ENCODE measurements at regions of chr9 and their contacts with region 1.

Region 1: GRCh38 chr9:29691758-29692407 is 2118.6 kb upstream of the C9orf72 start:
- DNase-seq: peak; percentile 48
- H3K4me3 ChIP-seq: no peak overlapping the region
- H3K27ac ChIP-seq: no peak overlapping the region
- H3K4me1 ChIP-seq: no peaks in the 10 kb centered on the region
- H3K27me3 ChIP-seq: no peaks in the 10 kb centered on the region
- CTCF ChIP-seq: peak; percentile 44 to 70

Region 2: GRCh38 chr9:28539432-28540070 is 1152.3 kb before region 1 on chr9:
- CTCF ChIA-PET with region 1: interaction called, 7 read pairs
- dilution Hi-C with region 1: no loop called
- in situ Hi-C with region 1: no loop called
- intact Hi-C with region 1: loop called (anchors 10 kb)
- DNase-seq: peak; percentile 80
- H3K4me3 ChIP-seq: no peak overlapping the region
- H3K27ac ChIP-seq: no peak overlapping the region
- H3K4me1 ChIP-seq: peaks cover 4% of the 10 kb centered on the region
- H3K27me3 ChIP-seq: no peaks in the 10 kb centered on the region
- CTCF ChIP-seq: no peak

Region 3: DNA sequence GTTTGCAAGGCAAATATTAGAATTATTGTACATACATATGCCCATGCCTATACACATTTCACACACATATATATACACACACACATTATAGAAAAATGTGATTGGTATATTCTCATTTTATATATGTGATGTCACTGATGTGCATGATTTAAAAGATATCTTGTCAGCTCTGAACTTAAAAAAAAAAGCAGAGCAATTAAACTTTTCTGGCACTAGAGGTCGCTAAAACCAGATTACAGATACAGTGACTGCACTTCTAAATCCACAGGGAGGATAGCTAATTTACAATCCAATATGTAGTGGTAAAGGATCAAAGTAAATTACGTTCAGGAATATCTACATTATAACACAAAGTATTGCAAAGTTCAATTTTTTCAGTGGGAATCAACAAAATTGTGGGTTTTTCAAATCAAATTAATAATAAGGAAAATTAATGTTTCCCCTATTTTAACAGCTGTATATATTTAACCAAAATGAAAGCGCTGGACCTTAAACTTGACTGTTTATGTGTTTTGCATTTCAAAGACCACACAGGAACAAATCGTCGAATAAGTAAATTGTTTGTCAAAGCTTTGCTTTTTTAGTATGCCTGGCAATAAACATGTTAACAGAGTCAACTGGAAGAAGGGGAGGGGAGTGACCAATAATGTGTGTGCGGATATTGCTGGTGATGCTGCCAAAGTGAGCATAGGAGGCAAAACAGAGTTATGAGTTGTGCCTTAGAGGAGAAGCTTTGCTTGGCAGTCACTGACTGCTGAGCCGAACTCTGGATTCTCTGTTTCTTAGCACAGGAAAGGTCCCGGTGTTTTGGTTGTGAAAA is 917.3 kb before region 1 on chr9:
- CTCF ChIA-PET with region 1: interaction called, 5 read pairs
- dilution Hi-C with region 1: no loop called
- in situ Hi-C with region 1: loop called in 1 of 2 experiments (anchors 25 kb)
- intact Hi-C with region 1: no loop called
- DNase-seq: peak; percentile 36
- H3K4me3 ChIP-seq: no peak overlapping the region
- H3K27ac ChIP-seq: no peak overlapping the region
- H3K4me1 ChIP-seq: peaks cover 6% of the 10 kb centered on the region
- H3K27me3 ChIP-seq: no peaks in the 10 kb centered on the region
- CTCF ChIP-seq: peak; percentile 67 to 69

Region 4: DNA sequence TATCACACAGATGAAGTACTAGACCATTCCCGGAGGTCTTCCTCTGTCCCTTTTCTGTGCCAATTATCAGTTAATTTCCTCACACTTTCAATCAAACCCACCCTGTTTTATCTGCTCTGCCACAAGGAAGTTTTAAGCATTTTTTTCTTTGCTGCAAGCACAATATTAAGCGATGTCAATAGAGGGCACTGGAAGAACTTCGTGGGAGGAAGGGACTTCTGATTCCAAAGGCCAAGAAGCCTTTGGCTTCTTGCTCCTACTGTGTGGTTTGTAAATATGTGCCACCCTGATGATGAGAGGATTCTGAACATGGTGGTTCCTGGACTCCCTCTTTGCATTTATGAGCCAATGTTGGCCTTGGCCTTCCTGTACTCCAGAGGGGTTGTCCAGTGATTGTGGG is 406.1 kb before region 1 on chr9:
- CTCF ChIA-PET with region 1: no interaction called
- dilution Hi-C with region 1: no loop called
- in situ Hi-C with region 1: no loop called
- intact Hi-C with region 1: loop called (anchors 2 kb)
- DNase-seq: peak; percentile 8
- H3K4me3 ChIP-seq: no peak overlapping the region
- H3K27ac ChIP-seq: no peak overlapping the region
- H3K4me1 ChIP-seq: no peaks in the 10 kb centered on the region
- H3K27me3 ChIP-seq: no peaks in the 10 kb centered on the region
- CTCF ChIP-seq: peak; percentile 18 to 51

Region 5: DNA sequence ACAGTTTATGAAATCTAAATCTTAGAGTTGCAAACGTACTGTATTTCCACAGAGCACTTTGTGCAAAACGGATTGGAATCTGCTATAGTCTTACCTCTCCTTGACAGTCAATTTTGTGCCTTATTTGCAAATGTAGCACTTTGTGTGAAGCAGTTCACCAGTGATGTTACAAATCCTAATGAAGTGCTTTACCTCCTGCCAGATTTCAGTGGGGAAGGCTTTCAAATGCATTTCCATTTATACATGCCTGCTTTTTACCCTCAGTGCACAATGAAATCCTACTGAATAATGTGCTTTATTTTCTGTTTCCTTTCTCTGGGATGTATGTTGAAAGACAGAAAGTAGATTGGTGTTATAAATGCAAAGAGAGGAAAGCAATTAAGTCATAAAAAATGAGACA is 23.0 kb after region 1 on chr9:
- CTCF ChIA-PET with region 1: no interaction called
- dilution Hi-C with region 1: no loop called
- in situ Hi-C with region 1: no loop called
- intact Hi-C with region 1: no loop called
- DNase-seq: no peak
- H3K4me3 ChIP-seq: no peak overlapping the region
- H3K27ac ChIP-seq: no peak overlapping the region
- H3K4me1 ChIP-seq: no peaks in the 10 kb centered on the region
- H3K27me3 ChIP-seq: no peaks in the 10 kb centered on the region
- CTCF ChIP-seq: no peak

Region 6: DNA sequence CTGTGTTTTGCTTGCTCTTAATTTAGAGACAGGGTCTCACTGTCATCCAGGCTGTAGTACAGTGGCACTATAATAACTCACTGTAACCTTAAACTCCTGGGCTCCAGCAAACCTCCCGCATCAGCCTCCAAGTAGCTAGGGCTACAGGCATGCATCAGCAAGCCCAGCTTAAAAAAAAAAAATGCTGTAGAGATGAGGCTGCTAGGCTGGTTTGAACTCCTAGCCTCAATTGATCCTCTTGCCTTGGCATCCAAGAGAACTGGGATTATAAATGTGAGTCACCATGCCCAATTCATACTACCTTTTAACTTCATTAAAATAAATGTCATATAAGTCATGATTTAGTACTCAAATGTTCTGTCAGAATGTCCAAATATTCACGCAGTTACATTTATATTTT is 77.1 kb after region 1 on chr9:
- CTCF ChIA-PET with region 1: no interaction called
- dilution Hi-C with region 1: no loop called
- in situ Hi-C with region 1: no loop called
- intact Hi-C with region 1: no loop called
- DNase-seq: peak; percentile 43
- H3K4me3 ChIP-seq: no peak overlapping the region
- H3K27ac ChIP-seq: no peak overlapping the region
- H3K4me1 ChIP-seq: no peaks in the 10 kb centered on the region
- H3K27me3 ChIP-seq: no peaks in the 10 kb centered on the region
- CTCF ChIP-seq: no peak